Right ventricle myocardium superior (tissue), 1 donor: ENCODE measurements at regions of chr1 and their contacts with region 1.

Region 1: GRCh38 chr1:56709269-56709880 is 64.3 kb downstream of the PRKAA2 start:
- DNase-seq: no peak
- ATAC-seq: peak; percentile 77

Region 2: DNA sequence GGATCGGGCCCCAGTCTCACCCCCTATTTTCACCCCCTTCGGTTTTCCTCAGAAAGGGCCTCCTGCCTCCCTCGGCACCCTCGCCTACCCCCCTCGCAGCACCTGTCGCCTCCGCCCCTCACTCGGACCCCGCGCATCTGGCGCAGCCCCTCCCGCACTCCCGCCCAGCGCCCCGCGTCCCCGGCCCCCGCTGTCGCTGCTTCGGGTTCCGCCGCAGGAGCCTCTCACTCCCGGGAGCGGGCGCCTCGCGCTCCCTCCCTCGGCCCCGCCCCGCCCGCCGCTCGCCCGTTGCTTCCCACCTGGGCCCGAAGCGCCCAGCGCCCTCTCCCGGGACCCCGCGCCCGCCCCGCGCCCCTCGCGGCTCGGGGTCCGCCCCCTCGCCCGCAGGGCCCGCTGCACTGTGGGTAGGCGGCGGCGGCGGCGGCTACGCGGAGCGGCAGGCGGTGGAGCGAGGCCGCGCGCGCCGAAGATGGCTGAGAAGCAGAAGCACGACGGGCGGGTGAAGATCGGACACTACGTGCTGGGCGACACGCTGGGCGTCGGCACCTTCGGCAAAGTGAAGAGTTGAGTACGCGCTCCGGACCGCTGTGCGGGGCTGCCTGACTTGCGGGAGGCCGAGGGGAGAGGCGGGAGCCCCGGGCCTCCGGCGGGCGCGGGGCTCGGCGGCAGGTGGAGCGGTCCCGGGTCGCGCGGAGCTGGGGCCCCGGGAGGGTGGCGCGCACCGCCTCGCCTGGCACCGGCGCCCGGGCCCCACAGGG is 64.3 kb before region 1 on chr1 and contains the start of gene PRKAA2:
- intact Hi-C with region 1: loop called (anchors 10 kb)
- DNase-seq: peak; percentile 63
- ATAC-seq: peak; percentile 86
- total RNA-seq, gene PRKAA2: 77.2 TPM

Region 3: DNA sequence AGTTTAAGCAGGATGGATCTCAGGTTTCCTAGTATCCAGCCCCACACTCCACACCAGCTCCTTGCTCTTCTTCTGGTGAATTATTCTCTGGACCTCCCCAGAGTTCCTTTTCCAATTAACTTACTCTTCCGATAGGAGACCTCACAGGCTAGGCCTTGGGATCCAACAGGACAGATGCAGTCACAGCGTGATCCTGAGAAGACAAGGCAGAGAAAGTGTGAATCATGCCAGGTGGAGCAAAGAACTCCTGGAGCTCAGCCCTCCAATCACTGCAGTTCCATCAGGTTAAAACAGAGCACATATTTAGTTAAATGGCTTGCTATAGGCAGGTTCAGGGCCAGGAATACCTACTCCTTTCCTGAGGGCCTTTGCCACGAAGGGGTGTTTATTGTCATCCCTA is 222.3 kb after region 1 on chr1:
- intact Hi-C with region 1: no loop called
- DNase-seq: no peak
- ATAC-seq: no peak